ENCODE measurements at regions of chr3 and their contacts with region 1.

Region 1: GRCh38 chr3:47522082-47522987 is 8.8 kb upstream of the ELP6 start:
- DNase-seq: peak; percentile 82
- H3K4me3 ChIP-seq: no peak overlapping the region
- H3K27ac ChIP-seq: no peak overlapping the region
- H3K27me3 ChIP-seq: peaks cover 2% of the 10 kb centered on the region
- CTCF ChIP-seq: peak; percentile 91

Region 2: DNA sequence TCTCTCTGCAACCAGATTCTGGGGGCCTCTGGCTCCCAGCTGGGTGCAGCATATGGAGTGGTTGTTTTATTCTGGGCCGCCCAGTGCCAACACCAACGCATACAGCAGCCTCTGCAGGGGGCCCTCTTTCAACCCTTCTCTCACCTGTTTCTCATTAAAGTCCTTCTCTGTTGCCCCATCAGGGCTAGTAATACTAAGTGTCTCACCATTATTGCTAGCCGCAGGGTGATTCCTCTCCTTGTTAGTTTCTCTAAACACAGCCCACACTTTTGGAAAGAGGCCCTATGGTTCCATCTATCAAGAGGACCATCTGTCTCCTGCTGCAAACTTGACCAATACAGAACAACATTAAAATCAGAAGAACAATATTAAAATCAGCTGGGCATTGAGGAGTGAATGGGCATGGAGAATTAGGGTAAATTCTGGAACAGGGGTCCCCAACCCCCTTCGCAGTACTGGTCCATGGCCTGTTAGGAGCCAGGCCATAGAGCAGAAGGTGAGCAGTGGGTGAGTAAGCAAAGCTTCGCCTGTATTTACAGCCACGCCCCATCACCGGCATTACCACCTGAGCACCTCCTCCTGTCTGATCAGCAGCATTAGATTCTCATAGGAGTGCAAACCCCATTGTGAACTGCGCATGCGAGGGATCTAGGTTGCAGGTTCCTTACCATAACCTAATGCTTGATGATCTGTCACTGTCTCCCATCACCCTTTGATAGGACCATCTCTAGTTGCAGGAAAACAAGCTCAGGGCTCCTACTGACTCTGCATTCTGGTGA is 865.4 kb before region 1 on chr3:
- CTCF ChIA-PET with region 1: no interaction called
- POLR2A ChIA-PET with region 1: no interaction called
- DNase-seq: no peak
- H3K4me3 ChIP-seq: no peak overlapping the region
- H3K27ac ChIP-seq: no peak overlapping the region
- H3K27me3 ChIP-seq: peaks cover 10% of the 10 kb centered on the region
- CTCF ChIP-seq: no peak

Region 3: DNA sequence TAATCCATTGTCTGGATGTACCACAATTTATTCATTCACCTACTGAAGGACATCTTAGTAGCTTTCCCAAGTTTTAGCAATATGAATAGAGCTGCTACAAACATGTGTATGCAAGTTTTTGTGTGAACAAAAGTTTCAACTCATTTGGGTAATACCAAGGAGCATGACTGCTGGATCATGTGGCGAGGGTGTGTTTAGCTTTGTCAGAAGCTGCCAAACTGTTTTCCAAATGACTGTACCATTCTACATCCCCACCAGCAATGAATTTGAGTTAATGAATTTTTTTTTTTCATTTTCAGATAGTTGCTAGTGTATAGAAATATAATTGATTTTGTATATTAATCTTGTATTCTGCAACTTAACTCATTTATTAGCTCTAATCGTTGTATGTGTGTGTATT is 11.1 kb after region 1 on chr3:
- CTCF ChIA-PET with region 1: interaction called, 11 read pairs
- POLR2A ChIA-PET with region 1: no interaction called
- DNase-seq: no peak
- H3K4me3 ChIP-seq: no peak overlapping the region
- H3K27ac ChIP-seq: no peak overlapping the region
- H3K27me3 ChIP-seq: peaks cover 10% of the 10 kb centered on the region
- CTCF ChIP-seq: no peak

Region 4: DNA sequence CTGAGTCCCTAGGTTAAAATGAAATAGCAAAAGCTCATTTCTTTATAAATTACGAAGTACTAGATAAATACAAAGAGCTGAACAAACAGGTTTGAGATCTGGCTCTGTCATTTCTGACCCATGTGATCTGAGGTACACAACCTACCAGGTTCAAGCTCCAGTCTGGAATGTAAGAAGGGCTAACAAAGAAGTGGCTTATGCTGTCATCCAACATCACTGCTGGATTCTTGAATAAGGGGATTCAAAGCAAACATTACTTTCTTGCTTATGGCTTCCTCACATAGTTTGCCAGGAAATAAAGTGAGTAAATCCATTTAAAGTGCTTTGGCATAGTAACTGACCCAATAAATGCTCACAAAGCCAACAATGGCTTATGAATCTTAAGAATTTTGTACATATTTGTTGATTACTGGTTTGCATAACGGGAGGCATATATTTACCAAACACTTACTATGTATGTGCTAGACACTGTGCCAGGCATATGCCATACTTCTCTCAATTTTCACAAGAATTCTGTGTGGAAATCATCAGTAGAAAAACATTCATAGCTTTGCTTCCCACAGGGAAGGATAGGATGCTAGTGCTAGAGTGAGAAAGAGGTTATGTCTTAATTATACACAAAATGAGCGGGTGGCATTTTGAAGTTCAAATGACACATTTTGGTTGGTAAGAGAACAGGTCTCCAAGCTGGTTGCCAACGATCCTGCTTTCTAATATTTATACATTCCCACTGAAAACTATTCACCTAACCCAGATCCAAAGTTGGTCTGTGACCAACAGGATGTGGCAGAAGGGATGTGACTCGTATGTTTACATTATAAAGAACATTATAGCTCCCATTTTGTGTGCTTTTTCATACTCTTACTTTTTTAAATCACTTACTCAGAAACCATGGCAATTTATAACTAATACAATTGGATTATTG is 95.0 kb after region 1 on chr3:
- CTCF ChIA-PET with region 1: interaction called, 11 read pairs
- POLR2A ChIA-PET with region 1: no interaction called
- DNase-seq: no peak
- H3K4me3 ChIP-seq: no peak overlapping the region
- H3K27ac ChIP-seq: no peak overlapping the region
- H3K27me3 ChIP-seq: no peaks in the 10 kb centered on the region
- CTCF ChIP-seq: no peak

Region 5: GRCh38 chr3:47781685-47782445 is 259.5 kb after region 1 on chr3 and contains the start of gene SMARCC1:
- CTCF ChIA-PET with region 1: interaction called, 48 read pairs
- POLR2A ChIA-PET with region 1: no interaction called
- DNase-seq: peak; percentile 93
- H3K4me3 ChIP-seq: peak within 1 kb of the TSS; percentile 89
- H3K27ac ChIP-seq: peak within 1 kb of the TSS; percentile 98
- H3K27me3 ChIP-seq: no peaks in the 10 kb centered on the region
- CTCF ChIP-seq: no peak
- polyA plus RNA-seq, gene SMARCC1: 34.3 and 38.5 TPM in 2 replicates

Region 6: GRCh38 chr3:47791193-47791855 is 269.0 kb after region 1 on chr3:
- CTCF ChIA-PET with region 1: interaction called, 48 read pairs
- POLR2A ChIA-PET with region 1: no interaction called
- DNase-seq: no peak
- H3K4me3 ChIP-seq: no peak overlapping the region
- H3K27ac ChIP-seq: no peak overlapping the region
- H3K27me3 ChIP-seq: no peaks in the 10 kb centered on the region
- CTCF ChIP-seq: no peak

Region 7: GRCh38 chr3:47802734-47803477 is 280.6 kb after region 1 on chr3 and contains the start of gene DHX30:
- CTCF ChIA-PET with region 1: interaction called, 10 read pairs
- POLR2A ChIA-PET with region 1: interaction called, 3 read pairs
- DNase-seq: no peak
- H3K4me3 ChIP-seq: peak within 1 kb of the TSS; percentile 87
- H3K27ac ChIP-seq: peak within 1 kb of the TSS; percentile 96
- H3K27me3 ChIP-seq: no peaks in the 10 kb centered on the region
- CTCF ChIP-seq: no peak
- polyA plus RNA-seq, gene DHX30: 30.7 and 36.1 TPM in 2 replicates

Measured in AG04450 (cell line).